RWPE1 (cell line): ENCODE measurements at regions of chr1 and their contacts with region 1.

Region 1: GRCh38 chr1:41713557-41714327 is 205.0 kb downstream of the HIVEP3 start:
- DNase-seq: peak; percentile 78
- H3K27ac ChIP-seq: no peak overlapping the region
- CTCF ChIP-seq: no peak

Region 2: DNA sequence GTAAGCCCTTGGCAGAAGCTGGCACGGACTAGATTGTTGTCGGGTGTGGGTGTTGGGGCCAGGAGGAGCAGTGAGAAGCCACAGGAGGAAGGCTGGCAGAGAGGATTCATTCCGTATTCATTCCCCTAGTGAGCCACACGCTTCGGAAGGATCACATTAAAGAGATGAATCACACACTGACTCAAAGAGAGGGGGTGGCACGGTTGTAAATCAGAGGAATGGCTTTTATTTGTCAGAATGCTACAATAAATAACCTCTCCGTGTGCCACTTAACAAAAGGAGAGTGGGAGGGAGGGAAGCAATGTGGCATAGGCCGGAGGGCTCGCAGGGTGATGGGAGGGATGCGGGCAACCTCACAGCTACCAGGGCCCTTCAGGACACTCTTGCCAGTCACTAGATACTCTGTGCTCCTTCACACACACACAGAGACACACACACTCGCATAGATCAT is 69.5 kb after region 1 on chr1:
- CTCF ChIA-PET with region 1: interaction called, 16 read pairs
- POLR2A ChIA-PET with region 1: no interaction called
- DNase-seq: peak; percentile 92
- H3K27ac ChIP-seq: peak overlapping the region; percentile 75
- CTCF ChIP-seq: no peak